GM13977 (cell line): ENCODE measurements at regions of chr17 and their contacts with region 1.

Region 1: DNA sequence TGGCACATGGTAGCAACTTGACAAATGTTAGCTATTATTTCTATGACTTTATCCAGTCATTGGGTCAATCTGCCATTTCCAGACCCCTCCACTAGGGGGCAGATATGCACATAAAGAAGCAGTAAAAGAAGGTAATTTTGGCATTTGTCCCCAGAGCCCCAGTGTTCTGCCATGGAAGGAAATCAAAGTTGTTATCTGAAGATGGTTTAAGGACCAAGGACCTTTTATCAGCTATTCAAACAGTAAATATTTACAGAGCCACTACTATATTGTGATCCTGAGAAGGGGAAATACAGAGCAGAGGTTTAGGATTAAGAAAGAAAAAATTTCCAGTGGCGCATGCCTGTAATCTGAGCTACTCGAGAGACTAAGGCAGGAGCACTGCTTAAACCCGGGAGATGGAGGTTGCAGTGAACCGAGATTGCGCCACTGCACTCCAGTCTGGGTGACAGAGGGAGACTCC is 20.0 kb downstream of the TRAF4 start:
- DNase-seq: peak; percentile 74
- CTCF ChIP-seq: peak; percentile 81

Region 2: DNA sequence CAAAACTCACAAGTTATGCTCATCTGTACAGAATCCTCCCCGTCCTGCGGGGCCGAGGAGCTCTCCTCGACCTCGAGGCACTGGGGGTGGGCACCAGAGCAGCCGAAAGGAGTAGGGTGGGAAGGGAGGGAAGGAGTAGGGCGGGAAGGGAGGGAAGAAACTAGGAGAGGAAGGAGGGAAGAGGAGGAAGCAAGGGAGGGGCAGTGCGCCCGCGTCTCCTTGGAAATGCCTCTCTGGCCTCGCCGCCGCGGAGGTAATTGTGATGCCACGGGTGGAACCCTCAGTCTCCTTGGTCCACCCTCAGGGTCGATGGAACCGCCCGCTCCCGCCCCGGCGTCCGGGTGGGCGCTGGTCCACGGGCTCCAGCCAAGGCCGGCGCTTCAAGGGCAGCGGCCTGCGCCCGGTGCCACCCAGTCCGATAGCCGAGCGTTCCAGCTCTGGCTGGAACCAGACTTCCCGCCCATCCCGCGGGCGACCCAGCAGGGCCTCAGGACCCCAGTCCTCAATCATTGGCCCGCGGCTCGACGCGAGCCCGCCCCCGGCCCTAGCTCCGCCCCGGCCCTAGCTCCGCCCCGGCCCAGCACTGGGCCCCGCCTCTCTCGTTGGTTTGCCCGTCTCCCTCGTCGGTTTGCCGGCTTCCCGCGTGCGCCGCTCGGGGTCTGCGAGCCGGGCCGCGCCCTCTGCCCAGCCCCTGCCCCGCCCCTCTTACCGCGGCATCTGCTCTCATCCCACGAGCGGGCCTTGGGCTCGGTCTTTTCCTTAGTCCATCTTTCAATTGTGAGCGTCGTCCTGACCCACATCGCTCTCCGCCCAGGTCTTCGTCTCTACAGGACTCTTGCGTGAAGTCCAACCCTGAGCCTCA is 52.7 kb before region 1 on chr17:
- in situ Hi-C with region 1: no loop called
- DNase-seq: peak; percentile 98
- CTCF ChIP-seq: no peak

Region 3: DNA sequence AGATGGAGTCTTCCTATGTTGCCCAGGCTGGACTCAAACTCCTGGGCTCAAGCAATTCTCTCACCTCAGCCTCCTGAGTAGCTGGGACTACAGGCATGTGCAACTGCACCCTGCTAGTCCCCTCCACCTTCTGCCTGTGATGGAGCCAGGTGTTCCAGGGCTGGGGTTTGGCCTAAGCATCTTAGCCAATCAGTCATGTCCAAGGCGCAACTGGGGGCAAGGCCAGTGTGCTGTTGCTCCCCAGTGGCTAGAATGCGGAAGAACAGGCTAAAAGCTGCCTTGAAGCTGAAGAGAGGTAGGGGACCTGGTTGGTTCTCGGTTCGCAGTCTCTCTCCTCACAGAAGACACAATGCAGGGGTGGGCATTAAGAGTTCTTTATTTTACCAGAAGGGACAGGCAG is 115.1 kb after region 1 on chr17:
- in situ Hi-C with region 1: no loop called
- DNase-seq: peak; percentile 63
- CTCF ChIP-seq: peak; percentile 65

Region 4: GRCh38 chr17:28916302-28916934 is 152.6 kb after region 1 on chr17:
- in situ Hi-C with region 1: loop called (anchors 10 kb)
- DNase-seq: peak; percentile 50
- CTCF ChIP-seq: peak; percentile 60

Region 5: DNA sequence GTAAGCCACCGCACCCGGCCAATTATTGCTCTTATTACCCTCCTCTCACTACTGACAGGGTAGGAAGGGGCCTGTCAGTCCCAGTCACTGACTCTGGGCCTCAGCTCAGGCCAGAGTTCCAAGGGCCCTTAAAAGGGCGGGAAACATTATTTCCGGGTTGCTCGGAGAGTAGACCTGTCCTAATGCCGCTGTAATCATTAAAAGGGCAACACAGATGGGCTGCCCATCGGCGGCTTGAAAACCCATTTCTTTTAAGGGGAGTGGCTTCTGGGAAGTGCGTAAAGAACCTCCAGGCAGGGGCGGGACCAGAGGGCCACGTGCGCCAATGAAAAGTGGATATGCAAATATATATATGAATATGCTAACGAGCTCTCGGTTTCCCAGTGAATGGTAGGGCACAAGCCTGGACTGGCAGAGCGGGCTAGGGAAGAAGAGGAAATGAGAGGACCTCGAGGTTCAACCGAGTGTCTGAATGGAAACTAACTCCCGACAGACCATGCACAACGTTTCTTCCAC is 305.7 kb after region 1 on chr17:
- in situ Hi-C with region 1: no loop called
- DNase-seq: no peak
- CTCF ChIP-seq: no peak